ENCODE measurements at regions of chr1 and their contacts with region 1.

Region 1: DNA sequence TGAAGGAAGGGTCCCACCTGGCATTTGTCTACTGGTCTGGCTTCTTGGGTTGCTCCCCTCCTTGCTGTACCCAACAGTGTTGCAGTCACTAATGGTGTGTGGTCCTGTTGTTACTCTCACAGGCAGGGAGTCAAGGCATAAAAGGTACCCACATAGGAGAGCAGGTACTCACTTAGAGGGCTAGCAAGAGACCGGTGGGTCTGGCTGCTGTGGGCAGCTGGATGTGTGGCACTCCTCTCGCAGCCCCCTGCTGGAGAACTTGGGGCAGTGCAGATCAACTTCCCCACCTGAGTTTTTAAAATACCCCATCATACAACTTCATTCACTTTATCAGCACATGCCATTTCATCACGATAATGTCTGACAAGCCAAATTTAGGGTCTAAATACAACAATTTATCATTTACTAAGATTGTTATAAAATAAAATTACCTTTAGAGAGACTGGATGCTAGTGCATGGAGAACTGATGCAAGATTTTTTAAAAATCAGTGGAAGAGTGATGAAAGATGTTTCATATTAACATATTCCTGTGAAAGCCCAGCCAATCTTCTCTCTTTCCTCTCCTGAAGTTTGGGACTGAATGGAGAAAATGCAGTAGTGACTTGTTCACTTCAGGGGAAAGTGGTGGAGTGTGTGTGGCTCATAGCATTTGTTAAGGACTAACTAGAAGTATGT is 42.8 kb downstream of the ACP6 start:
- DNase-seq: peak in 3 of 5 donors; percentile 37 to 68 (median 49)
- H3K4me3 ChIP-seq: no peak overlapping the region
- H3K27ac ChIP-seq: no peak overlapping the region
- H3K4me1 ChIP-seq: peaks cover 0 to 6% (median 0%) of the 10 kb centered on the region in 3 donors
- H3K27me3 ChIP-seq: no peaks in the 10 kb centered on the region
- CTCF ChIP-seq: peak; percentile 86

Region 2: GRCh38 chr1:147214842-147215539 is 412.6 kb before region 1 on chr1:
- intact Hi-C with region 1: no loop called
- DNase-seq: no peak
- H3K4me3 ChIP-seq: no peak overlapping the region
- H3K27ac ChIP-seq: peak overlapping the region in 1 of 2 donors; percentile 8
- H3K4me1 ChIP-seq: no peaks in the 10 kb centered on the region
- H3K27me3 ChIP-seq: no peaks in the 10 kb centered on the region
- CTCF ChIP-seq: no peak

Region 3: GRCh38 chr1:147434921-147435320 is 192.7 kb before region 1 on chr1:
- intact Hi-C with region 1: no loop called
- DNase-seq: no peak
- H3K4me3 ChIP-seq: no peak overlapping the region
- H3K27ac ChIP-seq: no peak overlapping the region
- H3K4me1 ChIP-seq: no peaks in the 10 kb centered on the region
- H3K27me3 ChIP-seq: no peaks in the 10 kb centered on the region
- CTCF ChIP-seq: no peak

Region 4: DNA sequence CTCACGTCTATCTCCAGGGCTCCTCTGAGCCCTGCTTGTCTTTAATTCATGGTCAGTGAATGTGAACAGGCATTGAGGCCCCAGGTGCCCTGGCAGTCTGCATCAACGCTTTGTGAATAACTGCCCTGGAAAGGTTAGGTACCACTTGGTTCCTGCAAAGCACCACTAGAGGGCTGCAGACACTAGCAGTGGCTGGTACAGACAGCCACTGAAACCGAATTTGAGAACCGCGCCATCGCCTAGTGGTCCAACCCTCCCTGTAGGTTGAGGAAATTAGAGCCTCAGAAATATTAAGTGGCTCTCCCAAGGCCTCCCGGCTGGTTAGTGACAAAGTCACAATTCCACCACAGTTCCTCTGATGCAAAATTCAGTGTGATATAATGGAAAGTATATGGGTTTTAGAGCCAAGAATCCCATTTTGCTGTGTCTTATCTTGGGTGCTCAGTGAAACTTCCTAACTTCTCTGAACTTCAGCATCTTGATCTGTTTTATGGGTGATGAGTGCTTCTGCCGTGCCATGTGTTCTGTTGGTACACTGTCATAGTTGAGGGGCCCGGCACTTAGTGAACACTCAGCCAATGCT is 132.5 kb before region 1 on chr1:
- intact Hi-C with region 1: loop called (anchors 10 kb)
- DNase-seq: peak; percentile 73 to 91 (median 82)
- H3K4me3 ChIP-seq: no peak overlapping the region
- H3K27ac ChIP-seq: no peak overlapping the region
- H3K4me1 ChIP-seq: no peaks in the 10 kb centered on the region
- H3K27me3 ChIP-seq: no peaks in the 10 kb centered on the region
- CTCF ChIP-seq: peak; percentile 97